Ovary (tissue), 10 donors: ENCODE measurements at regions of chr22 and their contacts with region 1.

Region 1: DNA sequence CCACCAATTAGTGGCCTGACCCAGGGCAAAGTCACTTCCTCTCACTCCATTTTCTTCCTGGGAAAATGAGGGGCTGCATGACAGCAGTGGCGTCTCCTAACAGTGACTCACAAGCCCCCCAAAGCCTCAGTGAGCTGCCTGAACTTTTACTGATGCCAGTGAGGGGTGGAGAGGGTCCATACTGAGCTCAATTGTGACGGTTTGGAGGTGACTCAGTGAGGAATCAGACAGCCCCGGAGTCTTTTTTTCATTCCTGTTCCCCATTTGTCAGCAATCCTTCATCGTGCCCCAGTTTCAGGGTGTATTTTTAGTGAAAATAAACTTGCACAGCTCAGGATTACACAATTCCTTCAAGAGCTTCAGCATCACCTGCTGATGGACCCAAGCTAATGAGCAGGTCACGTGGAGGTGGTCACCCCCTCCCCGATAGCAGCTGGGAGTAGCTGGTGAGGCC is 30.1 kb upstream of the RASD2 start:
- DNase-seq: no peak
- H3K4me3 ChIP-seq: no peak overlapping the region
- H3K27ac ChIP-seq: no peak overlapping the region
- H3K4me1 ChIP-seq: no peaks in the 10 kb centered on the region
- H3K27me3 ChIP-seq: no peaks in the 10 kb centered on the region
- CTCF ChIP-seq: no peak
- EP300 ChIP-seq: no peak
- POLR2A ChIP-seq: no peak

Region 2: DNA sequence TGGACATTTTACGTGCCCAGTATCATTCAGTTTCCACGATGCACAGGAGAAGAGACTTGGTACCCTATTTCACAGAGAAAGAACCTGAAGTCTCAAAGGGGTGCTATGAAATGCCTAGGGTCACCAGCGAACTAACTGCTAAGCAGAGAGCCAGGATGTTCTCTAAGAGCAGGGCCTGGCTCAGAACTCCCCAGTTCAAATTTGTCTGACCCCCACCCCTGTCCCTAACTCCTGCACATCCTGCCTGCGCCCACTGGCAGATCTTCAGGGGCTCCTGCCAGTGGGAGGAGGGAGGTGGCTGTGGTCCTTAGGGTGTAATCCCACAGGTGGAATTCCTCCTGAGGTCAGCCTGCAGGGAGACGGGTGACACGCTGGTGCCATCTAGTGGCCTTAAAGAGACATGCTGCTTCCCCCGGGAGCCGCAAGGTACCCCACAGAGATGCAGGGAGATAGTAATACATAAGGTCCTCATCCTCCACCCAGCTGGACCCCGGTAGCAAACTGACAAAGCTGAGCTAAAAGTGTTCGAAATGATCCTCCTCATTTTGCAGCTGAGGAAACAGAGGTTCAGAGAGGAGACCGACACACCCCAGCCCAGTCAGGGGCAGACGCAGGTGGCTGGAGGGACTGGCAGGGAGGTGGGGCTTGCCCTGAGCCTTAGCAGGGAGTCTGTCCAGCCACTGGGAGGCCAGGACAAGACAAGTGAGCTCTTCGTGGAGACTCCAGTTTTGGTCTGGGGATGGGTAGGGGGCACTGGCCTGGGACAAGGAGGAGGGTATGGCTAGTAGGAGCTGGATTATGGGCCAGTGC is 72.6 kb after region 1 on chr22:
- intact Hi-C with region 1: no loop called
- DNase-seq: peak; percentile 43 to 73 (median 68)
- H3K4me3 ChIP-seq: no peak overlapping the region
- H3K27ac ChIP-seq: no peak overlapping the region
- H3K4me1 ChIP-seq: no peaks in the 10 kb centered on the region
- H3K27me3 ChIP-seq: no peaks in the 10 kb centered on the region
- CTCF ChIP-seq: peak; percentile 83 to 92 (median 88)
- EP300 ChIP-seq: no peak
- POLR2A ChIP-seq: no peak

Region 3: GRCh38 chr22:36713436-36713835 is 1202.9 kb after region 1 on chr22:
- intact Hi-C with region 1: loop called in 1 of 4 experiments (anchors 10 kb)
- DNase-seq: no peak
- H3K4me3 ChIP-seq: no peak overlapping the region
- H3K27ac ChIP-seq: no peak overlapping the region
- H3K4me1 ChIP-seq: no peaks in the 10 kb centered on the region
- H3K27me3 ChIP-seq: no peaks in the 10 kb centered on the region
- CTCF ChIP-seq: no peak
- EP300 ChIP-seq: no peak
- POLR2A ChIP-seq: no peak